ENCODE measurements at regions of chr10 and their contacts with region 1.

Region 1: GRCh38 chr10:73096449-73097304 is at the start of gene P4HA1:
- DNase-seq: peak; percentile 99
- CTCF ChIP-seq: peak; percentile 83

Region 2: GRCh38 chr10:73076360-73077183 is 20.1 kb before region 1 on chr10:
- CTCF ChIA-PET with region 1: interaction called, 14 read pairs
- POLR2A ChIA-PET with region 1: interaction called, 19 read pairs
- DNase-seq: no peak
- CTCF ChIP-seq: no peak

Region 3: GRCh38 chr10:73110345-73110849 is 13.7 kb after region 1 on chr10 and contains the start of gene NUDT13:
- CTCF ChIA-PET with region 1: interaction called, 70 read pairs
- POLR2A ChIA-PET with region 1: interaction called, 30 read pairs
- DNase-seq: peak; percentile 68
- CTCF ChIP-seq: no peak

Region 4: GRCh38 chr10:73136627-73137026 is 40.0 kb after region 1 on chr10:
- CTCF ChIA-PET with region 1: interaction called, 4 read pairs
- POLR2A ChIA-PET with region 1: interaction called, 11 read pairs
- DNase-seq: no peak
- CTCF ChIP-seq: no peak

Measured in GM10248 (cell line).